CD4-positive, alpha-beta memory T cell (primary cell): ENCODE measurements at regions of chr19 and their contacts with region 1.

Region 1: GRCh38 chr19:40750059-40750873 is at the start of gene ACTMAP:
- DNase-seq: peak; percentile 100
- H3K4me3 ChIP-seq: peak within 1 kb of the TSS; percentile 81 to 98
- H3K4me3 Mint-ChIP-seq: peak within 1 kb of the TSS; percentile 95 to 100 (median 98)
- H3K27ac ChIP-seq: peak within 1 kb of the TSS; percentile 86
- H3K27ac Mint-ChIP-seq: peak within 1 kb of the TSS; percentile 89 to 99 (median 99)
- H3K4me1 ChIP-seq: peaks cover 42% of the 10 kb centered on the region
- H3K4me1 Mint-ChIP-seq: peaks cover 22 to 50% (median 31%) of the 10 kb centered on the region in 4 donors
- H3K27me3 ChIP-seq: no peaks in the 10 kb centered on the region
- H3K27me3 Mint-ChIP-seq: no peaks in the 10 kb centered on the region
- total RNA-seq, gene ACTMAP: 5.2 to 5.5 TPM

Region 2: GRCh38 chr19:40690693-40691420 is 59.4 kb before region 1 on chr19:
- CTCF ChIA-PET with region 1: interaction called, 3 read pairs
- POLR2A ChIA-PET with region 1: interaction called, 12 read pairs
- intact Hi-C with region 1: loop called (anchors 1 kb)
- DNase-seq: peak; percentile 78 to 85 (median 80)
- H3K4me3 ChIP-seq: peak overlapping the region; percentile 66 to 73
- H3K4me3 Mint-ChIP-seq: peak overlapping the region; percentile 85 to 94 (median 90)
- H3K27ac ChIP-seq: peak overlapping the region; percentile 60
- H3K27ac Mint-ChIP-seq: peak overlapping the region; percentile 61 to 97 (median 92)
- H3K4me1 ChIP-seq: peaks cover 8% of the 10 kb centered on the region
- H3K4me1 Mint-ChIP-seq: peaks cover 2 to 6% (median 4%) of the 10 kb centered on the region in 4 donors
- H3K27me3 ChIP-seq: no peaks in the 10 kb centered on the region
- H3K27me3 Mint-ChIP-seq: no peaks in the 10 kb centered on the region

Region 3: GRCh38 chr19:40707615-40708014 is 42.7 kb before region 1 on chr19:
- CTCF ChIA-PET with region 1: no interaction called
- POLR2A ChIA-PET with region 1: no interaction called
- intact Hi-C with region 1: no loop called
- DNase-seq: no peak
- H3K4me3 ChIP-seq: no peak overlapping the region
- H3K4me3 Mint-ChIP-seq: no peak overlapping the region
- H3K27ac ChIP-seq: no peak overlapping the region
- H3K27ac Mint-ChIP-seq: no peak overlapping the region
- H3K4me1 ChIP-seq: no peaks in the 10 kb centered on the region
- H3K4me1 Mint-ChIP-seq: peaks cover 4 to 17% (median 12%) of the 10 kb centered on the region in 4 donors
- H3K27me3 ChIP-seq: no peaks in the 10 kb centered on the region
- H3K27me3 Mint-ChIP-seq: no peaks in the 10 kb centered on the region

Region 4: DNA sequence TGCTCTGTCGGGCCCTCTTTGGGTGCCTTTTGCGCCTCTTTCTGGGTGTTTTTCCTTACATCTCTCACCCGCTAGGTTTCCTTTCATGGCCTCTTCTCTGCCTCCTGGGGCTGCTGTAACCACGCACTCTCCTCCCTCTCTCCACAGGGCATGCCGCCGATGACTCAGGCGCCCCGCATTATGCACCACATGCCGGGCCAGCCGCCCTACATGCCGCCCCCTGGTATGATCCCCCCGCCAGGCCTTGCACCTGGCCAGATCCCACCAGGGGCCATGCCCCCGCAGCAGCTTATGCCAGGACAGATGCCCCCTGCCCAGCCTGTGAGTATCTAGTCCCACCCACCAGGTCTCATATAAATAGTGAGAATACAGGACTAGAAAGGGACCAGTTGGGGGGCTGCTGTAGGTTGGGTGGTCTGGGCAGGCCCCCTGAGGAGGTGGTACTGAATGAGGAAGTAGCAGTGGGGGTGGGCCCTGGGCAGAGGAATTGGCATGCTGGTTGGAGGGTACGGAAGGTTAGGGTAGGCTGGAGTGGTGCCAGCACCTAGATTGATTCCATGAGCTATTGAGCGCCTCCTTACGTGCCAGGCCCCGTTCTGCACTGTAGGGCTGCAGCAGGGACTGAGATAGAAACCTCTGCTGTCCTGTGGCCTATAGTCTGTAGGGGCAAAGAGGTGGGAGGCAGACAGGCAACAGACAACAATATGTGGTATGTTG is 12.6 kb after region 1 on chr19:
- CTCF ChIA-PET with region 1: interaction called, 4 read pairs
- POLR2A ChIA-PET with region 1: interaction called, 13 read pairs
- intact Hi-C with region 1: no loop called
- DNase-seq: no peak
- H3K4me3 ChIP-seq: no peak overlapping the region
- H3K4me3 Mint-ChIP-seq: no peak overlapping the region
- H3K27ac ChIP-seq: no peak overlapping the region
- H3K27ac Mint-ChIP-seq: peak overlapping the region in 4 of 7 donors; percentile 29 to 80 (median 66)
- H3K4me1 ChIP-seq: peaks cover 14% of the 10 kb centered on the region
- H3K4me1 Mint-ChIP-seq: peaks cover 17 to 47% (median 28%) of the 10 kb centered on the region in 4 donors
- H3K27me3 ChIP-seq: no peaks in the 10 kb centered on the region
- H3K27me3 Mint-ChIP-seq: no peaks in the 10 kb centered on the region

Region 5: DNA sequence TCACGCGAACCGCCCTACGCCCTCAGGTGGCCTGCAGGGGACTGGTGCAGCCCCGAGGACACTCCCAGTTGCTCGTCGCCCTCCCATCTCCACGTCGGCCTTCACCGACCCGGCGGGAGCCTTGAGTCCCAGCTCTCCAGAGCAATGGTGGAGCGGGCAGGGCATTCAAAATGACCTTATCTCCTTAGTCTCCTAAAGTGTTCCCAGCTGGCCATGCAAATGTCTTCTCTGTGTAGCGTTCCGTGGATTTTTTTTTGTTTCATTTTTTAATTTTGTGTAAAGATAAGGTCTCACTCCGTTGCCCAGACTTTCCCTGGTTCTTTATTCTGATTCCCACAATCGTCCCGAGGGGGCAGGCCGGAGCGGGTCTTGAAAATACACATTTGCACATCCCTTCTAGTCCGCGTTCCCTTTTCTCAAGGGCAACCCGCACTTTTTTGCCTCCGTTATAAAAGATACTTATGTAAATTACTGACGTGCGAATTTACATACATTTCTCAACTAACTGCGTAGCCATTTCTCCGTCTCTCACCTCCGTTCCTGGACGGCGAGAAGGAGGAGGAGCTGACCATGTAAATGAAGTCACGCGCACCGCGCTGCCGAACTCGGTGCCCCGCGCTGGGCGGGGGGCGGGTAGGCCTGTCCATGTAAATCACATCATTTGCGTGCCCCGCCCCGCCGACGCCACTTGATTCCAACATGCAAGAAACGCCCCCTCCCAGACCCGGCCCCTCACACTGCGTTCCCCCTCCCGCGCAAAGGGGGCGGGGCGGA is 48.1 kb after region 1 on chr19:
- CTCF ChIA-PET with region 1: interaction called, 7 read pairs
- POLR2A ChIA-PET with region 1: interaction called, 133 read pairs
- intact Hi-C with region 1: loop called (anchors 1 kb)
- DNase-seq: peak; percentile 100
- H3K4me3 ChIP-seq: peak overlapping the region; percentile 55 to 86
- H3K4me3 Mint-ChIP-seq: peak overlapping the region; percentile 92 to 99 (median 96)
- H3K27ac ChIP-seq: peak overlapping the region; percentile 82
- H3K27ac Mint-ChIP-seq: peak overlapping the region; percentile 98 to 100 (median 99)
- H3K4me1 ChIP-seq: peaks cover 47% of the 10 kb centered on the region
- H3K4me1 Mint-ChIP-seq: peaks cover 30 to 55% (median 41%) of the 10 kb centered on the region in 4 donors
- H3K27me3 ChIP-seq: no peaks in the 10 kb centered on the region
- H3K27me3 Mint-ChIP-seq: no peaks in the 10 kb centered on the region

Region 6: GRCh38 chr19:40813182-40813958 is 63.1 kb after region 1 on chr19:
- CTCF ChIA-PET with region 1: interaction called, 10 read pairs
- POLR2A ChIA-PET with region 1: interaction called, 133 read pairs
- intact Hi-C with region 1: no loop called
- DNase-seq: no peak
- H3K4me3 ChIP-seq: no peak overlapping the region
- H3K4me3 Mint-ChIP-seq: peak overlapping the region in 4 of 8 donors; percentile 41 to 97 (median 78)
- H3K27ac ChIP-seq: no peak overlapping the region
- H3K27ac Mint-ChIP-seq: peak overlapping the region; percentile 8 to 86 (median 49)
- H3K4me1 ChIP-seq: peaks cover 49% of the 10 kb centered on the region
- H3K4me1 Mint-ChIP-seq: peaks cover 18 to 58% (median 33%) of the 10 kb centered on the region in 4 donors
- H3K27me3 ChIP-seq: no peaks in the 10 kb centered on the region
- H3K27me3 Mint-ChIP-seq: no peaks in the 10 kb centered on the region

Region 7: DNA sequence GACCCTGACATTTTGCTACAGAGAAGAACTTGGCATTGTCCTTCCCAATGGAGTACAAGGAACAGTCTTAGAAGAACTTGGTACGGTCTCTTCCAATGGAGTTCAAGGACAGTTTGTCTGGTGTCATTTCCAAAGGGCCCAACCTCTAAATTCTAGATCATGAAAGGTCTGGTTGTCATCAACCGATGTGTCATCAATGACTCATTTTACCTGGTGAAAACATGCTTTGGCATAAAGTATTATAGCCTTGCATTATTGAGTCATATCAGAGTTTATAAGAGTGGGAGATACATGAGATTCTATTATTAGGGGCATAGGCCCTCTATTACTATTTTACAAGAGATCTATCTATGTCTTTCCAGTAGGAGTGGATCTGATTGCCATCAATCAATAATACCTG is 245.1 kb after region 1 on chr19:
- CTCF ChIA-PET with region 1: no interaction called
- POLR2A ChIA-PET with region 1: no interaction called
- intact Hi-C with region 1: no loop called
- DNase-seq: no peak
- H3K4me3 ChIP-seq: no peak overlapping the region
- H3K4me3 Mint-ChIP-seq: no peak overlapping the region
- H3K27ac ChIP-seq: no peak overlapping the region
- H3K27ac Mint-ChIP-seq: no peak overlapping the region
- H3K4me1 ChIP-seq: no peaks in the 10 kb centered on the region
- H3K4me1 Mint-ChIP-seq: no peaks in the 10 kb centered on the region
- H3K27me3 ChIP-seq: no peaks in the 10 kb centered on the region
- H3K27me3 Mint-ChIP-seq: peaks cover 7 to 19% of the 10 kb centered on the region in 2 donors